ENCODE measurements at regions of chr15 and their contacts with region 1.

Region 1: DNA sequence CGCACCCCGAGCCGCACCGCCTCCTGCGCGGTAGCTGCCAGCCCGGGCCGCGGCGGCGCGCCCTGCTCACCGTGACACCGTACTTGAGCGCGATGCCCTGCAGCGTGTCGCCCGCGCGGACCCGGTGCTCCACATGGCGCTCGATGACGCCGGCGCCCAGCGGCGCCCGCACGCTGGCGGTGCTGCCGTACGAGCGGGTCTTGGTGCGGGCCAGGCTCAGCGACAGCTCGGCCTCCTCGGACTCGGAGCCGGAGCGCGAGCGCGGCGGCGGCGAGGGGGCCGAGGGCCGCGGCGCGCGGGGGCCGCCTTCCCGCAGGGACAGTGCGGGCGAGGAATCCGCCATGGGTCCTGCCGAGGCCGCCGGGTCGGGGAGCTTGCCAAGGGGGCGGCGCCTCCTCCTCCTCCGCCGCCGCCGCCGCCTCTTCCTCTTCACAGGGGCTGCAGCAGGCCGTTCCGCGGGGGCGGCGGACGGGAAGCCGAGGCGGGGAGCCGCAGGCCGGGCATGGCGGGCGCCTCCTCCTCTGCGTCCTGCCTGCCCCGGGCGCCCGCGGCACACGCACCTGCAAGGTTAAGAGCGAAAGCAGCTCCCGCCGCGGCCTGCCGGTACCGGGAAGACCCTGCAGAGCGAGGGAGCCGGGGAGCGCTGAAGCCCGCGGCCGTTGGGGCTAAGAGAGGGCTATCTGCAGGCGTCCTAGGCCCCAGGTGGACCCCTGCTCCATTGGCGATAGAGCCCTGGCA is at the start of gene LYSMD2:
- DNase-seq: peak; percentile 75
- ATAC-seq: peak; percentile 49
- H3K4me3 Mint-ChIP-seq: peak within 1 kb of the TSS; percentile 90
- H3K27ac Mint-ChIP-seq: peak within 1 kb of the TSS; percentile 93
- H3K4me1 Mint-ChIP-seq: peaks cover 52% of the 10 kb centered on the region
- H3K27me3 Mint-ChIP-seq: no peaks in the 10 kb centered on the region
- CTCF ChIP-seq: no peak
- total RNA-seq, gene LYSMD2: 41.8 and 48.6 TPM in 2 replicates

Region 2: DNA sequence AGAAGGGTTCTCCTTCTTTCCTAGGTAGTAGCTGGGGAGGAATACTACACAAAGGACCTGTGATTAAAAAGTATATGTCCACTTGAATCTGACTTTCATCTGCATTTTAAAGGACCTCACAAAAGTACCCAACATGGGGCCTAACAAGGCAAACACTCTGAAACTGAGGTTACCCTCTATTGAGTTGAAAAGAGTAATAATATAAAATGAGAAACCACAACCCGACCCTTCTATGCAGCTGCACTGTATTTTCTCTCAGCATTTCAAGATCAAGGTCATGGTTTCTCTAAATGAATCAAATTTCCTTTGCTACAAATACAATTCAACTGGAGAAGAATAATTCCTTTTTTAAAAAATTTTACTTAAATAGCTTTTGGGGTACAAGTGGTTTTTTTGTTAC is 221.2 kb before region 1 on chr15:
- CTCF ChIA-PET with region 1: no interaction called
- POLR2A ChIA-PET with region 1: no interaction called
- intact Hi-C with region 1: no loop called
- DNase-seq: no peak
- ATAC-seq: no peak
- H3K4me3 Mint-ChIP-seq: no peak overlapping the region
- H3K27ac Mint-ChIP-seq: no peak overlapping the region
- H3K4me1 Mint-ChIP-seq: no peaks in the 10 kb centered on the region
- H3K27me3 Mint-ChIP-seq: no peaks in the 10 kb centered on the region
- CTCF ChIP-seq: no peak

Region 3: DNA sequence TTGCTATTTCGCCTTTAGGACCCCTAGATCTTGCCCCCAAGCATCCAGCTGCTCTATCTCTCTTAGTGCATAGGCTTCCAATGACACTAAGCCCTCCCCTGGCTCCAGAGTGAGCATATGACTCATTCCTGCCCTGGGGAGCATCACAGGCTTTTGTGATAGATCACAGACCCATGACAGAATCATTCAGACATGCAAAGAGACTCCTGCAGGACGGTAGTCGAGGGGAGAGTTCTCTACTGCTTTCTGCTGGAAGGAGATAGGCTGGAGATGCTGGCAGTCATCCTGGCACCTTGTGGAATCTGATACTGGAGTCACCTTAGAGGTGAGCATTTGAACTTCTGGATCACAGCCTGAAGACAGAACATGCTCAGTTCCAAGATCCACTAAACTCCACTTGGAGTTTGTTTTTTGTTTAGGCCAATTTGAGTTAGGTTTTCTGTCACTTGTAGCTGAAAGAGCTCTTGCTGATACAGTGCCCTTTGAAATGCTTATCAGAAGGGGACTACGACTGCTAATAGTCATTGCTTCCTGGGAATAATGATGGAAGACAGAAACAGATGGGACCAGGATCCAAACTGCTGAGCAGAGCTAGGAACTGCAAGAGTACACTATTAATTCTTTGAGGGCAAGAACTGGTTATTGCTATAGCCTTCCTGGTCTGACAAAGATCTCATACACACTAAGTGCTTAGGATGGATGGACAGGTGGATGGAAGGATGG is 10.9 kb before region 1 on chr15:
- CTCF ChIA-PET with region 1: interaction called, 17 read pairs
- POLR2A ChIA-PET with region 1: interaction called, 31 read pairs
- intact Hi-C with region 1: loop called (anchors 1 kb)
- DNase-seq: no peak
- ATAC-seq: peak; percentile 97
- H3K4me3 Mint-ChIP-seq: peak overlapping the region; percentile 52
- H3K27ac Mint-ChIP-seq: peak overlapping the region; percentile 59
- H3K4me1 Mint-ChIP-seq: peaks cover 74% of the 10 kb centered on the region
- H3K27me3 Mint-ChIP-seq: no peaks in the 10 kb centered on the region
- CTCF ChIP-seq: no peak

Region 4: DNA sequence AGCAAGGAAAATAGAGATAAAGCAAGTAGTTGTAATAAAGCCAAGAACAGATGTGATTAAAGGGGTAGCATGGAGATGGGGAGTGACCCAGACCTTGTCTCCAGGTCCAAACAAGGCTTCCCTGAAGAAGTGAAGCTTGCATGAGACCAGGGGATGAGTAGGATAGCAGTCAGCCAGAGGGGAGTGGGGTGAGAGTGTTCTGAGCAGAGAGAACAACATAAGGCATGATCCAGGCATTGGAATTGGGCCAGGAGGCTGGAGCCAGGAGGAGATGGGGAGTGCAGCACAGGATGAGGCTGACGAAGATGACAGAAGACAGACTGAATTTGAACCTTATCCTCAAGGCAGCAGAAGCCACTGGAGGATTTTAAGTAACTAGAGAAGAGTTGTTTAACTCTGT is 21.2 kb after region 1 on chr15:
- CTCF ChIA-PET with region 1: interaction called, 3 read pairs
- POLR2A ChIA-PET with region 1: interaction called, 98 read pairs
- intact Hi-C with region 1: no loop called
- DNase-seq: no peak
- ATAC-seq: no peak
- H3K4me3 Mint-ChIP-seq: no peak overlapping the region
- H3K27ac Mint-ChIP-seq: no peak overlapping the region
- H3K4me1 Mint-ChIP-seq: peaks cover 10% of the 10 kb centered on the region
- H3K27me3 Mint-ChIP-seq: no peaks in the 10 kb centered on the region
- CTCF ChIP-seq: no peak

Region 5: DNA sequence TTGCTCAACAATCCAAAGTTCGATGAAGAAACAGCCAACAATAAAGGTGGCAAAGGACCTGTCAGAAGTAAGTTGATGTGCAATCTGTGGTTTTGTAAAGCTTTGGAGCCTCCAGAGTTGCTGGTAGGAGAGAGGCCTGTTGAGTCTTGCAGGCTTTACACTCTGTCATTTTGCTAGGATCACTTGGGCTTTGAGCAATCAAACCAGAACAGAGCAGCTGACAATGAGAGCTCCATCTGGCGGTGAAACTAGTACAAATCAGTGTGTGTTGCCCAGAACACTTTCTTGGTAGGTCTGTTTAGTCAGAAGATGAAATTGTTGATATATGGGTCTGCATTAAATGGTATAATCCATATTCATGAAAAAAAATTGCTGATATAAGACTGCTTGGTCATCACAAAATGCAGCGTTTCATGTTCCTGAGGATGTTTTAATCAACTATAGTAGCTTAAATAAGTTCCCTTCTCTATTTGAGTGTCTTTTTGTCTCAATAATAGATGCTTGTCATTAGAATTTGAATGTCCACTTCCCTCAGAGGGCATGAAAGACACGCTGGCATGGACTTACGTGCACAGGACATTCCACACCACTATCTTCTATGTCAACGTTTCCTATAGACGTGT is 39.6 kb after region 1 on chr15:
- CTCF ChIA-PET with region 1: interaction called, 58 read pairs
- POLR2A ChIA-PET with region 1: interaction called, 25 read pairs
- intact Hi-C with region 1: loop called (anchors 1 kb)
- DNase-seq: no peak
- ATAC-seq: peak; percentile 70
- H3K4me3 Mint-ChIP-seq: no peak overlapping the region
- H3K27ac Mint-ChIP-seq: no peak overlapping the region
- H3K4me1 Mint-ChIP-seq: peaks cover 13% of the 10 kb centered on the region
- H3K27me3 Mint-ChIP-seq: no peaks in the 10 kb centered on the region
- CTCF ChIP-seq: peak; percentile 23

Region 6: DNA sequence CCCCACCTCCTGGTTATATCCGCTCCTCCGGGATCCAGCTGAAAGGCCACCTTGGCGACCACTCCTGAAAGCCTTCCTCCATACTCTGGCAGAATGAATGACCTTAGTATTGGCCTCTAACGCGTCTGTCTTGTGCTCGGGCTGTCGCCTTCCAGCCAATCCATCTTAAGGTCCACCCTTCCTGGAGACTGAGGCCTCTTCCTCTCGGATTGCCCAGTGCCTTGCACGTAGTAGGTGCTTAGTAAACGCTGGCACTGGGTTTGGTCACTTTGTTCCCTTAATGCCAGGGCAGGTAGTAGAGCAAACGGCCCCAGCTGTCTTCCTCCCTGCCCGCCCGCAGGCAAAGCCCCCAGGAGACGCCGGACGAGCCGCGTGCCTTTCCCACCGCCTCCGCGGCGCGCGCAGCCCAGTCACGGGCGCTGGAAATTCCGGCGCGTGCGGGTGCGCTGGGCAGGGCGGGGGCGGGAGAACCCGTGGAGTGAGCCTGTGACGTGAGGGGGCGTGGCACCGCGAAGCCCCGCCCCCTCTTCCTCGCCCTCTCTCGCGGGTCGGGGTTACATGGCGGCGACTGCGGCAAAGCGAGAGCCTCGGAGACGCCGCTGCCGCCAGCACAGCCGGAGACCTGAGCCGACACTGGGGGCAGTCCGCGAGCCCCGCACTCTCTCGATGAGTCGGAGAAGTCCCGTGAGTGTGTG is 281.4 kb after region 1 on chr15 and contains the start of gene MAPK6:
- CTCF ChIA-PET with region 1: no interaction called
- POLR2A ChIA-PET with region 1: no interaction called
- intact Hi-C with region 1: loop called (anchors 2 kb)
- DNase-seq: peak; percentile 95
- ATAC-seq: peak; percentile 83
- H3K4me3 Mint-ChIP-seq: peak within 1 kb of the TSS; percentile 96
- H3K27ac Mint-ChIP-seq: peak within 1 kb of the TSS; percentile 98
- H3K4me1 Mint-ChIP-seq: peaks cover 37% of the 10 kb centered on the region
- H3K27me3 Mint-ChIP-seq: no peaks in the 10 kb centered on the region
- CTCF ChIP-seq: no peak
- total RNA-seq, gene MAPK6: 16.1 and 16.2 TPM in 2 replicates

Region 7: GRCh38 chr15:52481915-52482314 is 744.5 kb after region 1 on chr15:
- CTCF ChIA-PET with region 1: no interaction called
- POLR2A ChIA-PET with region 1: no interaction called
- intact Hi-C with region 1: loop called (anchors 5 kb)
- DNase-seq: no peak
- ATAC-seq: peak; percentile 99
- H3K4me3 Mint-ChIP-seq: peak overlapping the region; percentile 7
- H3K27ac Mint-ChIP-seq: peak overlapping the region; percentile 85
- H3K4me1 Mint-ChIP-seq: peaks cover 57% of the 10 kb centered on the region
- H3K27me3 Mint-ChIP-seq: no peaks in the 10 kb centered on the region
- CTCF ChIP-seq: no peak

Measured in activated B cell treated with CpG ODN at 0.5 μM for 24 hours (primary cell).